ENCODE measurements at regions of chr6 and their contacts with region 1.

Region 1: DNA sequence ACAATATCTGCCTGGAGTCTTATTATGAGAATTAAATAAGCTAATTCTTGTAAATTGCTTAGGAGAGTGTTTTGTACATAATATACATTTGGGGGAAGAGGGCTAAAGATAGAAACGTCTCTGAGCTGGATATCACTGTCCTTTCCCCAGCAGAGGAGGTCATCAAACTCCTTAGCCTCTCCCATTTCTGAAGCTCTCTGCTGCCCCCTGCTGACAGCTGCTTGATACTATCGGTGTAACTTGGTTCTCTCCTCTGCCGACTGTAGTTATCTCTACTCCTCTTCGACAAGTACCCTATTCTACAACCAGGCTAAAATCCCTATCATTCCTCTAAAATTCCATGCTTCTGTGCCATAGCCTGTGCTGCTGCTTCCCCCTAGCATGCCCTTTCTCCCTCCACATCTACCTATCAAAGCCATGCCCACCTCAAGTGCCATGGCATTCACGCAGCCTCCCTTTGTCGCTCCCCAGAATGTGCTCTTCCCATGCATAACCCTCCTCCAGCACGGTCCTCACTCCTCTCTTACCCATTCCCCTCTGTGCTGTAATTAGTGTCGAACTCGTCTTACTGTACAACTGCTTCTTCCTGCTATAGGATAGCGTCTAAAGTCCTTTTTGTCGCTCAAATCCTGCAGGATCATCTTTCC is 101.2 kb downstream of the EPM2A start:
- DNase-seq: peak; percentile 89
- H3K4me3 Mint-ChIP-seq: no peak overlapping the region
- H3K27ac Mint-ChIP-seq: no peak overlapping the region
- H3K4me1 Mint-ChIP-seq: peaks cover 6% of the 10 kb centered on the region
- H3K27me3 Mint-ChIP-seq: no peaks in the 10 kb centered on the region
- CTCF ChIP-seq: peak; percentile 85

Region 2: DNA sequence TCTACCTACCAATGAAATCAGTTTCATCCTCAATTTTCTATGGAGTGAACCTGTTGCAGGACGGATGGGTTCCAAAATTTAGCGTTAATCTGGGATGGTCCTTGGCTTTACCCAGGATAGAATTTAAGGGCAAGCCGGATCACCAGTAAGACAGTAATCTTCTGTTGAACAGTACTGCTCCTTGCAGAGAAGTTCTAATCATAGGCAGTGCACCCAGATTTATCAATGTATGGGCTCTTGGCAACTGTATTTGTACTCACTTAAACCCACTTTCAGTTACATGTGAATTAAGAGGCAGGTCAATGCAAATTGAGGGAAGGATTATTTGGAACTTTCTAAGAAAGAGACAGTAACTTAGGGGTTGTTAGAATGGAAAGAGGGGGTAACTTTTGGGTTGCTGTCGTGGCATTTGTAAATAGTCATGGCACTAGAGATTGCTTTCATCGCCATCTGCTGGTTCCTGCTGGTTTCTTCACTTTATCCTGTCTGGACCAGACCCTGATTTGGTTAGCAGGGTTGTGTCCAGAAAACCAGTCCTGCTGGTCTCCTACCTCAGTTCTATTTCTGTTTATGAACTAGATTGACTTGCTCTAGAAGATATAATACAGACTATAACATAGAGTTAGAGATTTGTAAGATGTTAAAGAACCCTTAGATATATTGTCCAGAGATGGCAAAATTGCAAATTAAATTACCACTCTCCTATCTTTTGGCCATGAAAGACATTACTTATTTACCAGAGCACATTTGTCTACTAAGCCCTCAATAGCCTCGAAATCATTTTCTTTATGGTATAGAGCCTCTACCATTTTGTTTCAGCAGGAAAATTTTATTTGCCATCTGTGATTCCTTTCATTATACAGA is 702.7 kb before region 1 on chr6:
- CTCF ChIA-PET with region 1: interaction called, 5 read pairs
- POLR2A ChIA-PET with region 1: no interaction called
- intact Hi-C with region 1: loop called (anchors 10 kb)
- DNase-seq: peak; percentile 59
- H3K4me3 Mint-ChIP-seq: no peak overlapping the region
- H3K27ac Mint-ChIP-seq: no peak overlapping the region
- H3K4me1 Mint-ChIP-seq: no peaks in the 10 kb centered on the region
- H3K27me3 Mint-ChIP-seq: no peaks in the 10 kb centered on the region
- CTCF ChIP-seq: peak; percentile 52

Region 3: DNA sequence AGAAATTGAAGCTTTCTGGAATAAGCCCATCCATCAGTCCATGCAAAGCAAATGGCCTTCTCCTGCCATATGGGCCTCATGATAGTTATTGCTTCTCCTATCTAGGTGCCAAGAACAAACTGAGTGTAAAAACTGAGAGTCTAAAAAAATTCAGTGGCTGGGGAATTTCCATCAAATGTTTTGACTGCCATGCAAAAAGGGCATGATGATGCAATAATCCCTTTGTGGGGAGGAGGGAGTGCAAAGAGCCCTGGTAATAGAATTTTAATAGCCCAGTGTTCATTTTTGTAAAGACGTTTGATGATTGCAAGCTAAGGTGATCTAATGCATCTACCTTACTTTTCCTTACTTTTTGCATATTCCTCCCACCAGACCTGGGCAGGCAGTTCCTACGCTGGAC is 582.4 kb before region 1 on chr6:
- CTCF ChIA-PET with region 1: no interaction called
- POLR2A ChIA-PET with region 1: no interaction called
- intact Hi-C with region 1: no loop called
- DNase-seq: peak; percentile 37
- H3K4me3 Mint-ChIP-seq: no peak overlapping the region
- H3K27ac Mint-ChIP-seq: no peak overlapping the region
- H3K4me1 Mint-ChIP-seq: peaks cover 9% of the 10 kb centered on the region
- H3K27me3 Mint-ChIP-seq: no peaks in the 10 kb centered on the region
- CTCF ChIP-seq: no peak

Region 4: DNA sequence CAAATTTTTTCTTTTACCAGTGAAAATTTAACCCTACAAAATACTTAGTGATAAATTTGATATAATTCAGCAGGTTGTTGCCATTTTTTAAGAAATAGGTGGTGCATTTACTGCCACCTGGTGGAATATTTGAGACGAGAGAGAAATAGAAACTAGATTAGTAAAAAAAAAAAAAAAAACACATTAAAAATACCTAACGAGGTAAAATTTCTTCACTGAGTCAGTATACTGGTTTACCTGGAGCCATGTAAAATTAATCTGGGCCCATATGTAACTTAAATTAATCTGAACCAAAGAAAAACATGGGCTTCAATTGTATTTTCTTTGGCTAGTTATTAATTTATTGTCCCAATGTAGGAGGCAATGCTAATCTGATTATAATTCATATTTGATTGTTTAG is 419.5 kb before region 1 on chr6:
- CTCF ChIA-PET with region 1: interaction called, 28 read pairs
- POLR2A ChIA-PET with region 1: no interaction called
- intact Hi-C with region 1: loop called (anchors 1 kb)
- DNase-seq: peak; percentile 60
- H3K4me3 Mint-ChIP-seq: no peak overlapping the region
- H3K27ac Mint-ChIP-seq: peak overlapping the region; percentile 59
- H3K4me1 Mint-ChIP-seq: no peaks in the 10 kb centered on the region
- H3K27me3 Mint-ChIP-seq: no peaks in the 10 kb centered on the region
- CTCF ChIP-seq: peak; percentile 36

Region 5: GRCh38 chr6:145483191-145483996 is 150.7 kb before region 1 on chr6:
- CTCF ChIA-PET with region 1: interaction called, 14 read pairs
- POLR2A ChIA-PET with region 1: interaction called, 3 read pairs
- intact Hi-C with region 1: no loop called
- DNase-seq: peak; percentile 71
- H3K4me3 Mint-ChIP-seq: no peak overlapping the region
- H3K27ac Mint-ChIP-seq: peak overlapping the region; percentile 10
- H3K4me1 Mint-ChIP-seq: peaks cover 10% of the 10 kb centered on the region
- H3K27me3 Mint-ChIP-seq: no peaks in the 10 kb centered on the region
- CTCF ChIP-seq: no peak

Region 6: DNA sequence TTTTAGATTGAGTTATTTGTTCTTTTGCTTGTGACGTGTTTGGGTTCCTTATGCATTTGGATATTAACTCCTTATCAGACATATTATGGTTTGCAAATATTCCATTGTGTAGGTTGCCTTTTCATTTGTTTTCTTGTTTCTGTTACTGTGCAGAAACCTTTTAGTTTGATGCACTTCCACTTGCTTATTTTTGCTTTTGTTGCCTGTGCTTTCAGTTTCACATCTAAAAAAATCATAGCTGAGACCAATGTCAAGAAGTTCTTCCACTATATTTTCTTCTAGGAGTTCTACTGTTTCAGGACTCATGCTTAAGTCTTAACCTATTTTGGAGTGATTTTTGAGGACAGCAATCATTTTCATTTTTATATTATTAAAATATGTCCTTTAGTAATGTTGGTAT is 12.3 kb before region 1 on chr6:
- CTCF ChIA-PET with region 1: interaction called, 11 read pairs
- POLR2A ChIA-PET with region 1: no interaction called
- intact Hi-C with region 1: no loop called
- DNase-seq: no peak
- H3K4me3 Mint-ChIP-seq: no peak overlapping the region
- H3K27ac Mint-ChIP-seq: no peak overlapping the region
- H3K4me1 Mint-ChIP-seq: no peaks in the 10 kb centered on the region
- H3K27me3 Mint-ChIP-seq: no peaks in the 10 kb centered on the region
- CTCF ChIP-seq: no peak

Region 7: DNA sequence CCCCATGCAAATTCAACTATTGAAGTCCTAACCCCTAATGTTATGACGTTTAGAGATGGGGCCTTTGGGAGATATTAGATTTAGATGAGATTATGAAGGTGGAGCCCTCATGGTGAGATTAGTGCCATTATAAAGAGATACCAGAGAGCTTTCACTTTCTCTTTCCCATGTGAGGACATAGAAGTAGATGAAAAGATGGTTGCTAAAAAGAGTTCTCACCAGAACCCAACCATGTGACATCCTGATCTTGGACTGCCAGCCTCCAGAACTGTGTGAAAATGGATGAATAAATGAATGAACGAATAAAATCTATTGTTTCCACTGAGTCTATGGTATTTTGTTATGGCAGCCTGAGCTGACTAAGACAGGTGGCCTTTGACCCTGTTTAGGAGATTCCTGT is 231.1 kb after region 1 on chr6:
- CTCF ChIA-PET with region 1: no interaction called
- POLR2A ChIA-PET with region 1: no interaction called
- intact Hi-C with region 1: no loop called
- DNase-seq: no peak
- H3K4me3 Mint-ChIP-seq: no peak overlapping the region
- H3K27ac Mint-ChIP-seq: no peak overlapping the region
- H3K4me1 Mint-ChIP-seq: no peaks in the 10 kb centered on the region
- H3K27me3 Mint-ChIP-seq: no peaks in the 10 kb centered on the region
- CTCF ChIP-seq: no peak

Region 8: GRCh38 chr6:145887969-145888368 is 253.9 kb after region 1 on chr6:
- CTCF ChIA-PET with region 1: no interaction called
- POLR2A ChIA-PET with region 1: no interaction called
- intact Hi-C with region 1: loop called (anchors 5 kb)
- DNase-seq: peak; percentile 10
- H3K4me3 Mint-ChIP-seq: no peak overlapping the region
- H3K27ac Mint-ChIP-seq: no peak overlapping the region
- H3K4me1 Mint-ChIP-seq: no peaks in the 10 kb centered on the region
- H3K27me3 Mint-ChIP-seq: no peaks in the 10 kb centered on the region
- CTCF ChIP-seq: peak; percentile 28